Activated CD8-positive, alpha-beta T cell treated with anti-CD3 and anti-CD28 coated beads, Interleukin-2, amount 10 ng/mL, durations not matched to agents 7 days and 5 days (primary cell): ENCODE measurements at regions of chr20 and their contacts with region 1.

Region 1: GRCh38 chr20:33915726-33916331 is 77.9 kb upstream of the RALY start:
- DNase-seq: peak; percentile 61
- ATAC-seq: peak; percentile 71
- H3K4me3 Mint-ChIP-seq: no peak overlapping the region
- H3K27ac Mint-ChIP-seq: no peak overlapping the region
- H3K4me1 Mint-ChIP-seq: peaks cover 22% of the 10 kb centered on the region
- H3K27me3 Mint-ChIP-seq: peaks cover 14% of the 10 kb centered on the region

Region 2: GRCh38 chr20:33810885-33811777 is 104.7 kb before region 1 on chr20 and contains the start of gene CHMP4B:
- CTCF ChIA-PET with region 1: interaction called, 13 read pairs
- POLR2A ChIA-PET with region 1: no interaction called
- DNase-seq: peak; percentile 99
- ATAC-seq: peak; percentile 98
- H3K4me3 Mint-ChIP-seq: peak within 1 kb of the TSS; percentile 92
- H3K27ac Mint-ChIP-seq: peak within 1 kb of the TSS; percentile 93
- H3K4me1 Mint-ChIP-seq: peaks cover 36% of the 10 kb centered on the region
- H3K27me3 Mint-ChIP-seq: no peaks in the 10 kb centered on the region
- total RNA-seq, gene CHMP4B: 86.7 to 93.2 TPM

Region 3: DNA sequence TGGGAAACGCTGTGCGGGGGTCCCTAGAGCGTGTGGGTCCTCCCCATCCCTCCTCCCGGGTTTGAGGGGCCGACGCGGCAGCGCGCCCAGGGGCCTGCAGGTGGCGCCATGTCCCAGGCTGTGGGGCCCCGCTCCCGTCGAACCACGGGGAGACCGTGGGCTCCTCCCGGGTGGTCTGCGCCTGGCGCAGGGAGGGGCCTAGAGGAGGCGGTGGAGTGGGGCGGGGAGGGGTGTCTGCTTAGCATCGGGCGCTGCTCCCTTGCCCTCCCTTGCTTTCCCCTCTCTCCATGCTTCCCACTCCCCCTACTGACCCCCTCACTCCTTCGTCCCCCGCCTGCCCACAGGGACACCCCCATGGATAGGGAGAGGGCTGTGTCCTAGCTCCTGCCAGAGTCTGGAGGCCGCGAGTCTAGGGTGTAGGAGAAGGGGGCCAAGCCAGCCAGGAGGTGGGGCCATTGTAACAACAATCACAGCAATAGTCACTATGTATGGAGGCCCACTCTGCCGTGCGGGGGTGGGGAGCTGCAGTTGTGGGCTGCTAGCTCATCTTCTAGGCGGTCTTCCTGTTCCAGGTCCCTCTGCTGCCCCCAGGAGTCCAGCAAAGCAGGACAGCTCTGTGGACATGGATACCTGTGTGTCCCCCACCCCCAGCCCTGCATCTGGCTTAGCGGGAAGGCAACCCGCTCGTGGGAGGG is 53.0 kb before region 1 on chr20:
- CTCF ChIA-PET with region 1: interaction called, 21 read pairs
- POLR2A ChIA-PET with region 1: no interaction called
- DNase-seq: peak; percentile 63
- ATAC-seq: peak; percentile 52
- H3K4me3 Mint-ChIP-seq: no peak overlapping the region
- H3K27ac Mint-ChIP-seq: no peak overlapping the region
- H3K4me1 Mint-ChIP-seq: peaks cover 38% of the 10 kb centered on the region
- H3K27me3 Mint-ChIP-seq: no peaks in the 10 kb centered on the region

Region 4: GRCh38 chr20:33926425-33926824 is 10.6 kb after region 1 on chr20:
- CTCF ChIA-PET with region 1: interaction called, 17 read pairs
- POLR2A ChIA-PET with region 1: no interaction called
- DNase-seq: no peak
- ATAC-seq: no peak
- H3K4me3 Mint-ChIP-seq: no peak overlapping the region
- H3K27ac Mint-ChIP-seq: no peak overlapping the region
- H3K4me1 Mint-ChIP-seq: no peaks in the 10 kb centered on the region
- H3K27me3 Mint-ChIP-seq: peaks cover 10% of the 10 kb centered on the region

Region 5: DNA sequence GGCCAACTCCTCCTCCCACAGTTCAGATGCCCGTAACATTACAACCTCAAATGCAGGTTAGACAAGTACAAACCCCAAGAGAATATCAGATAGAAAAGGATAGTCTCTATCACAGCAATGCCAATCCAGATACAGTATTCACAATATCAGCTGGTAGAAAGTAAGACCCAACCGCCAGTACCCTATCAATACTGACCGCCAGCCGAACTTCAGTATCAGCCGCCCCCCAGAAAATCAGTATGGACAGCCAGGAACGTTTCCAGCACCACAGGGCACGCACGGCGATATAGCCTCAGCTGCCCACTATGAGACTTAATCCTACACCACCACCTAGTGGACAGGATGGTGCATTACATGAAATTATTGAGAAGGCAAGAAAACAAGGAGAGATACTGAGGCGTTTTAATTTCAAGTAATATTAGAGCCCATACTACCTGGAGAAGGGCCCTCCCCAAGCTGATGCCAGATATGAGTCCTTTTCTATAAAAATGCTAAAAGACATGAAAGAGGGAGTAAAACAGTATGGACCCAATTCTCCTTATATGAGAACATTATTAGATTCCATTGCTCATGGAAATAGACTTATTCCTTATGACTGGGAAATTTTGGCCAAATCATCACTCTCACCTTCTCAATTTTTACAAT is 213.8 kb after region 1 on chr20:
- CTCF ChIA-PET with region 1: interaction called, 19 read pairs
- POLR2A ChIA-PET with region 1: no interaction called
- DNase-seq: peak; percentile 75
- ATAC-seq: peak; percentile 90
- H3K4me3 Mint-ChIP-seq: peak overlapping the region; percentile 8
- H3K27ac Mint-ChIP-seq: no peak overlapping the region
- H3K4me1 Mint-ChIP-seq: peaks cover 8% of the 10 kb centered on the region
- H3K27me3 Mint-ChIP-seq: peaks cover 17% of the 10 kb centered on the region